ENCODE measurements at regions of chr1 and their contacts with region 1.

Region 1: DNA sequence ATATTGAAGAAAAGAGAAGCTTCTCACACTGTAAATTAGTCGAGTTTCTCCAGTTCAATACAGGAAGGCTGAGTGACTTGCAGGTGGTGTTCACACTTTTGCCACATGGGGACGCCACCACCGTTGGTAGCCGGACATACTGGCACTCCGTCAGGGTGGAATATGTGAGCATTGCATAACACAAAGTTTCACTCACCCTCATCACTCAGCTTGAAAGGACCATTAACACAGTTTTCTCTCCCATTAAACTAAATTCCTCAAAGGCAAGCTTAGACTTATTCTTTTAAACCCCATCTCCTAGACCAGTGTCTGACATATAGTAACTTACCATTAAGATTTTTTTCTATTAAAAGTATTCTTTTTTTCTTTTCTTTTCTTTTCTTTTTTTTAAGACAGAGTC is 105.3 kb upstream of the SERBP1 start:
- DNase-seq: peak; percentile 78
- H3K4me3 ChIP-seq: no peak overlapping the region
- H3K27ac ChIP-seq: peak overlapping the region; percentile 18
- H3K4me1 ChIP-seq: peaks cover 25% of the 10 kb centered on the region
- H3K27me3 ChIP-seq: no peaks in the 10 kb centered on the region
- CTCF ChIP-seq: peak; percentile 100

Region 2: DNA sequence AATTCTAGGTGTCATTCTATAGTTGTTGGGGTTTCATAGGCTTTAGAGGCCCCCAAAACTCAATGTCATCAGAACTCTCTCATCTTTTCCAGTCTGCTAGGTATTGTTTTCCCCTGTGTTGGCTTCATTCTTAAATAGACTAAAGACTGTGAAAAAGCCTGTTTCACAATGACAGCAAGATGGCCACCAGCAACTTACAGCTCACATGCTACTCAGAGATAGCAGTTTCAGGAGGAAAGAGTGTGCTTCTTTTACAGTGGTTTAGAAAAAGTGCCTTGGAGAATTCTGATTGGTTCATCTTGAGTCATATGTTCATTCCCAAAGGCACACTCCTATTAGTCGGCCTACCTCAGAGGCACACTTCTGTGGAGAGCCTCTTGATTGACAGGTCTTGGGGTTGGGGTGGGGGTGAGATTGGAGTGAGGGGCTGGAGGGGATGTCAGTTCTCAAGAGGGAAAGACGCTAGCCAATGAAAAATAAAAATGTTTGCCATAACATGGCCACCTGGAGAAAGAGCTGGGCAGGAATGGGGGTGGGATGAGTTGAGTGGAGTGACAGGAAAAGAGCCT is 360.7 kb before region 1 on chr1:
- CTCF ChIA-PET with region 1: no interaction called
- dilution Hi-C with region 1: no loop called
- in situ Hi-C with region 1: no loop called
- intact Hi-C with region 1: no loop called
- DNase-seq: no peak
- H3K4me3 ChIP-seq: no peak overlapping the region
- H3K27ac ChIP-seq: no peak overlapping the region
- H3K4me1 ChIP-seq: no peaks in the 10 kb centered on the region
- H3K27me3 ChIP-seq: no peaks in the 10 kb centered on the region
- CTCF ChIP-seq: no peak

Region 3: DNA sequence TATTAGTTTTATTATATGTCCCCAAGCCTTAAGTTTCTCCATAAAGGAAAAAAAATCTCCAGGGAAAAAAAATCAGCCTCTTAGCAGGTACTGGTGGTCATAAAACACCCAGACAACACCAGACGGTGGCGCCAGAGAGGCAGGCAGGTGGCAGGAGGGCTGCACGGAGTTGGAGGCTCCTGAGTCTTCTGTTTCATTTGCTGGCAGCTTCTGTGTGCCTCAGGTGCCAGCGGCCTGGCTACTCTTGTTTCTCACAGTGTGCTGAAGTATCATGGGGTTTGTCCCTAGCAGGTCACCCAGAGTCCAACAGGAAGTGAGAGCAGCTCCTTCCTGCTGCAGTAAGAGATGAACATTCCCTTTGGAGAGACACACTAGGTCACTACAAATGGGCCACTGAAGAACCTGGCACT is 26.2 kb after region 1 on chr1:
- CTCF ChIA-PET with region 1: interaction called, 9 read pairs
- dilution Hi-C with region 1: no loop called
- in situ Hi-C with region 1: no loop called
- intact Hi-C with region 1: loop called (anchors 1 kb)
- DNase-seq: peak; percentile 85
- H3K4me3 ChIP-seq: no peak overlapping the region
- H3K27ac ChIP-seq: peak overlapping the region; percentile 54
- H3K4me1 ChIP-seq: peaks cover 16% of the 10 kb centered on the region
- H3K27me3 ChIP-seq: no peaks in the 10 kb centered on the region
- CTCF ChIP-seq: peak; percentile 93 to 97

Region 4: GRCh38 chr1:67685067-67685557 is 149.6 kb after region 1 on chr1 and contains the start of gene GADD45A:
- CTCF ChIA-PET with region 1: interaction called, 14 read pairs
- dilution Hi-C with region 1: no loop called
- in situ Hi-C with region 1: no loop called
- intact Hi-C with region 1: loop called (anchors 1 kb)
- DNase-seq: peak; percentile 99
- H3K4me3 ChIP-seq: peak within 1 kb of the TSS; percentile 78 to 96 (median 79)
- H3K27ac ChIP-seq: peak within 1 kb of the TSS; percentile 97
- H3K4me1 ChIP-seq: peaks cover 26% of the 10 kb centered on the region
- H3K27me3 ChIP-seq: no peaks in the 10 kb centered on the region
- CTCF ChIP-seq: no peak
- total RNA-seq, gene GADD45A: 119 to 371 TPM

Region 5: GRCh38 chr1:67832737-67833601 is 297.5 kb after region 1 on chr1 and contains the start of gene GNG12:
- CTCF ChIA-PET with region 1: no interaction called
- dilution Hi-C with region 1: no loop called
- in situ Hi-C with region 1: loop called in 1 of 2 experiments (anchors 25 kb)
- intact Hi-C with region 1: loop called (anchors 1 kb)
- DNase-seq: peak; percentile 77
- H3K4me3 ChIP-seq: peak within 1 kb of the TSS; percentile 72 to 92 (median 90)
- H3K27ac ChIP-seq: peak within 1 kb of the TSS; percentile 90
- H3K4me1 ChIP-seq: peaks cover 54% of the 10 kb centered on the region
- H3K27me3 ChIP-seq: no peaks in the 10 kb centered on the region
- CTCF ChIP-seq: no peak
- total RNA-seq, gene GNG12: 130 to 183 TPM

Region 6: DNA sequence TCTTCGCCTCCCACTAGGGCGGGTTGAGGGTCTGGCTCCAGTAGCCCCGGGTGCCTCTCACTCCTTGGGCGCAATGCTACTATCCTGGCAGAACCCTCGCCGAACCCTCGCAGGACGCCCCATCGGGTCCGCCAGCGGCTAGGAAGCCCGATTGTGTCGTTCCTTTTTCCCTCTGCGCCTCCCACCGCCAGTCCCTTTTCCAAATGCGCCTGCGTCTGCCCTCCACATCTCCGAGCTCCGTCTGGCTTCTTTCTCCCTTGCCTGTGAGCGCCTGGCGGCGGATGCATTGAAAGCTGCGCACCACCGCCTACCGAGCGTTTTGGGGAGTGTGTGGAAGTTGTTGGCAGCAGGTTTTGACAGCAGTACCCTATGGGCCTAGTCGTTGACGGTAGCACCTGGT is 516.0 kb after region 1 on chr1:
- CTCF ChIA-PET with region 1: no interaction called
- dilution Hi-C with region 1: no loop called
- in situ Hi-C with region 1: no loop called
- intact Hi-C with region 1: loop called (anchors 2 kb)
- DNase-seq: peak; percentile 67
- H3K4me3 ChIP-seq: peak overlapping the region; percentile 55 to 63 (median 57)
- H3K27ac ChIP-seq: no peak overlapping the region
- H3K4me1 ChIP-seq: peaks cover 11% of the 10 kb centered on the region
- H3K27me3 ChIP-seq: no peaks in the 10 kb centered on the region
- CTCF ChIP-seq: peak; percentile 74 to 75

Region 7: DNA sequence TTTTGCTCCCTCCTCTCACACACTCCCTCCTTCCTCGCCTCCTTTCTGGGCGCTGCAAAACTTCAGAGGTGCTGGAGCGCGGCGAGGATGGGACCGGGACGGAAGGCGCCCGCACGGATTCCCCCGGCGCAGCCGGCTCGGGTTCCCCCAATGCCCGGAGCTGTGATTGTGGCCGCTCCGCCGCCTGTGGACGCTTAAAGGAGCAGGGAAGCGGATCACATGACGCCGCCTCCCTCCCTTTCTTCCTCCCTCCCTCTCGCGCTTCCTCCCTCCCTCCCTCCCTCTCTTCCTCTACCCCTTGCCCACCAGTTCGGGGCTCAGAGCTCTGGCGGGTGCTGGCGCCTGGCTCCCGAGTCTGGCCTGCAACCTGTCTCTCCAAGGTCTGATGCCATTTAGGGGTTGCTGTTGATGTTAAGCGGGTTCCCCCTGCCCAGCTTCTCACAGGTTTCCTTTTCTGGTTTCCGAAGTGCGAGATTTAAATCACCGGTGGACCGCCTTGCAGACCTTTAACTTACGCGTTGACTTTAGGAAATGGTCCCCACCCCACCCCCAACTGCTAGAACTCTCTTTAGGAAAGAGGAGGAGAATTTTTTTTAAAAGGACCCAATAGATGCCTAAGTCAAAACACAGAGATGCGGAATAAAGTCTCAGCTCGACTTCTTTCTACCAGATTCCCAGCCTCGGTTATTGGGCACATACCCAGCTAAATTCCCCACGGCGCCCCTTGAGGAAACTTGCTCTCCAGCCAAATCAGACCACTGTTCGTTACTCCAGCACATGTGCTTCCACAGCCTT is 697.1 kb after region 1 on chr1 and contains the start of gene WLS:
- CTCF ChIA-PET with region 1: no interaction called
- dilution Hi-C with region 1: no loop called
- in situ Hi-C with region 1: no loop called
- intact Hi-C with region 1: loop called (anchors 5 kb)
- DNase-seq: peak; percentile 70
- H3K4me3 ChIP-seq: peak within 1 kb of the TSS; percentile 78 to 100 (median 96)
- H3K27ac ChIP-seq: peak within 1 kb of the TSS; percentile 82
- H3K4me1 ChIP-seq: peaks cover 22% of the 10 kb centered on the region
- H3K27me3 ChIP-seq: no peaks in the 10 kb centered on the region
- CTCF ChIP-seq: no peak
- total RNA-seq, gene WLS: 93.9 to 113 TPM